CD8-positive, alpha-beta memory T cell (primary cell): ENCODE measurements at regions of chr1 and their contacts with region 1.

Region 1: DNA sequence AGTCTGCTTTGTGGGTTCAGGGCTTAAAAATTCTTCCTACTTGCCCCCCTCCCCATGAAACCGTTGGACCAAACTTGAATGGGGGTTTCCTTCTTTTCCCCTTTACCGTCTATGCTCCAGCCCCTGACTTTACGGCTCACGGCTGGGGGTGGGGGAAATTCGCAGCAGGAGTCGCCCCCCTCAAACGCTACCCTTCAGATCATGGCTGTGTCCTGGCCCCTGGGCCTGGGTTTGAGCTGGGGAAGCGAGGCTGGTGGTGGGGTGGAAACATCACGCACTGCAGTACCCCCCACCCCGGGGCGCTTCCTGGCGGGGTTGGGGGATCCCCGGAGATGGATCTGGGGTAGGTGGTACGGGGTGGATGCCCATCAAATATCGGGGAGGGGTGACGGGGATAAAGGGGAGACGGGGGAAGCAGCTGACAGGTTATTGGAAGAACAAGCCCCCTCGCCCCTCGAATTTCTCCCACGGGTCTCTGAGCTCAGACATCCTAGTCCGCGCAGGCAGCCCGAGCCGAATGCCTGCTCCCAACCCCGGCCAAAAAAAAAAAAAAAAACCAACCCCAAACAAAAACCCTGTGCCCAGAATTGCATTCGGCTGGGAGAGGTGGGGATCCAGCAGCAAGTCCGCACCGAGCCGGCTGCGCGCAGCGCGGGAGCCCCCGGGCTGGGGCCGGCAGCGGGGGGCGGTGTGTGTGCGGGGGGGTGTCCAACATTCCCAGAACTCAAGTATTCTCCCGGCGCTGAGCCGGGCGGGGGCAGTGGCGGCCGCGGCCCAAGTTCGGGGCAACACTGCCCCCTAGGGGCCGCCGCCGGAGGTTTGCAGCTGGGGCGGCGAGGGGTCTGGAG is 59.0 kb upstream of the ACOT11 start:
- DNase-seq: peak; percentile 56 to 78 (median 67)
- H3K4me3 ChIP-seq: peak overlapping the region; percentile 83
- H3K4me3 Mint-ChIP-seq: peak overlapping the region; percentile 85 to 93 (median 86)
- H3K27ac ChIP-seq: peak overlapping the region; percentile 75
- H3K27ac Mint-ChIP-seq: peak overlapping the region; percentile 75 to 97 (median 84)
- H3K4me1 ChIP-seq: peaks cover 35% of the 10 kb centered on the region
- H3K4me1 Mint-ChIP-seq: peaks cover 41 to 47% (median 45%) of the 10 kb centered on the region in 3 donors
- H3K27me3 ChIP-seq: no peaks in the 10 kb centered on the region
- H3K27me3 Mint-ChIP-seq: peaks cover 5 to 8% of the 10 kb centered on the region in 2 donors

Region 2: DNA sequence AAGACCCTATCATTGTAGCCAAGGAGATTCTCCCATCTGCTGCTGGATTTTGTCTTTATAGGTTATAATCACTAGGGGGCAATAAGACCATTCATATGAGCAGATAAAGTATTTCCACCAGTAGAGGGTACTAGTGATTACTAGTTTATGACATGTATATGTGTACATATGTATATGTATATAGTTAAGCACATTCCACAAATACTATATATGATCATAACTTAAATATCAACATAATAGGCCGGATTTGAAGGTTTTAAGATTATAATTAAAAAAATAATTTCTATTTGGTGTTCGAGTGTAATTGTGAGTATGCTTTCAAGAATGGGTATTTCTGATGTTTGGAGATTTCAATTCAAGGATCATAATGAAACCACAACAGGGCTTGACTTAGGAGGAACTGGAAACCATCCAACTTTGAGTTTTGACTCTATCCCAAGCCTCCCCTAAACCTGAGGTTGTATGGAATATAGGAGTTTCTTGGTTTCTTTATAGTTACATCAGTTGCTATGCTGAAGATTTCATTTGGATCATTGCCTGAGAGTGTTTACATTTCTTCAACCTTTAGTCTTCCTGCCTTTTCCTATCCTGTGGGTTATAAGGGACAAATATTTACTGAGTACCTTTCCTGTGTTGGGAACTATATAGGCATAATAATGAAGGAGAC is 418.7 kb before region 1 on chr1:
- CTCF ChIA-PET with region 1: interaction called, 17 read pairs
- POLR2A ChIA-PET with region 1: no interaction called
- DNase-seq: peak in 2 of 5 donors; percentile 48
- H3K4me3 ChIP-seq: no peak overlapping the region
- H3K4me3 Mint-ChIP-seq: no peak overlapping the region
- H3K27ac ChIP-seq: no peak overlapping the region
- H3K27ac Mint-ChIP-seq: peak overlapping the region in 1 of 8 donors; percentile 19
- H3K4me1 ChIP-seq: no peaks in the 10 kb centered on the region
- H3K4me1 Mint-ChIP-seq: peaks cover 0 to 2% (median 0%) of the 10 kb centered on the region in 3 donors
- H3K27me3 ChIP-seq: no peaks in the 10 kb centered on the region
- H3K27me3 Mint-ChIP-seq: no peaks in the 10 kb centered on the region

Region 3: GRCh38 chr1:54124472-54124871 is 364.5 kb before region 1 on chr1:
- CTCF ChIA-PET with region 1: interaction called, 11 read pairs
- POLR2A ChIA-PET with region 1: interaction called, 4 read pairs
- DNase-seq: no peak
- H3K4me3 ChIP-seq: no peak overlapping the region
- H3K4me3 Mint-ChIP-seq: no peak overlapping the region
- H3K27ac ChIP-seq: no peak overlapping the region
- H3K27ac Mint-ChIP-seq: no peak overlapping the region
- H3K4me1 ChIP-seq: no peaks in the 10 kb centered on the region
- H3K4me1 Mint-ChIP-seq: peaks cover 2 to 11% (median 8%) of the 10 kb centered on the region in 3 donors
- H3K27me3 ChIP-seq: no peaks in the 10 kb centered on the region
- H3K27me3 Mint-ChIP-seq: peaks cover 9 to 13% of the 10 kb centered on the region in 2 donors

Region 4: GRCh38 chr1:54199765-54200518 is 289.1 kb before region 1 on chr1 and contains the starts of genes CYB5RL and MRPL37:
- CTCF ChIA-PET with region 1: interaction called, 13 read pairs
- POLR2A ChIA-PET with region 1: no interaction called
- DNase-seq: peak; percentile 79 to 92 (median 89)
- H3K4me3 ChIP-seq: peak within 1 kb of the TSS; percentile 94
- H3K4me3 Mint-ChIP-seq: peak within 1 kb of the TSS; percentile 88 to 96 (median 93)
- H3K27ac ChIP-seq: peak within 1 kb of the TSS; percentile 75
- H3K27ac Mint-ChIP-seq: peak within 1 kb of the TSS; percentile 27 to 93 (median 92)
- H3K4me1 ChIP-seq: peaks cover 19% of the 10 kb centered on the region
- H3K4me1 Mint-ChIP-seq: peaks cover 37 to 55% (median 38%) of the 10 kb centered on the region in 3 donors
- H3K27me3 ChIP-seq: no peaks in the 10 kb centered on the region
- H3K27me3 Mint-ChIP-seq: no peaks in the 10 kb centered on the region
- total RNA-seq, gene CYB5RL: 11.8 to 13.9 TPM
- total RNA-seq, gene MRPL37: 226 to 229 TPM

Region 5: GRCh38 chr1:54406339-54407153 is 82.5 kb before region 1 on chr1 and contains the start of gene SSBP3:
- CTCF ChIA-PET with region 1: interaction called, 71 read pairs
- POLR2A ChIA-PET with region 1: interaction called, 63 read pairs
- DNase-seq: peak; percentile 86 to 93 (median 91)
- H3K4me3 ChIP-seq: peak within 1 kb of the TSS; percentile 64
- H3K4me3 Mint-ChIP-seq: peak within 1 kb of the TSS; percentile 95 to 99 (median 97)
- H3K27ac ChIP-seq: peak within 1 kb of the TSS; percentile 84
- H3K27ac Mint-ChIP-seq: peak within 1 kb of the TSS; percentile 91 to 98 (median 94)
- H3K4me1 ChIP-seq: peaks cover 62% of the 10 kb centered on the region
- H3K4me1 Mint-ChIP-seq: peaks cover 59 to 66% (median 61%) of the 10 kb centered on the region in 3 donors
- H3K27me3 ChIP-seq: no peaks in the 10 kb centered on the region
- H3K27me3 Mint-ChIP-seq: peaks cover 0 to 5% of the 10 kb centered on the region in 2 donors
- total RNA-seq, gene SSBP3: 41.6 to 52.7 TPM

Region 6: GRCh38 chr1:54474639-54475251 is 14.3 kb before region 1 on chr1:
- CTCF ChIA-PET with region 1: interaction called, 48 read pairs
- POLR2A ChIA-PET with region 1: interaction called, 8 read pairs
- DNase-seq: peak in 4 of 5 donors; percentile 26 to 65 (median 28)
- H3K4me3 ChIP-seq: peak overlapping the region; percentile 84
- H3K4me3 Mint-ChIP-seq: peak overlapping the region; percentile 75 to 93 (median 83)
- H3K27ac ChIP-seq: peak overlapping the region; percentile 8
- H3K27ac Mint-ChIP-seq: peak overlapping the region; percentile 86 to 99 (median 96)
- H3K4me1 ChIP-seq: peaks cover 44% of the 10 kb centered on the region
- H3K4me1 Mint-ChIP-seq: peaks cover 51 to 56% (median 55%) of the 10 kb centered on the region in 3 donors
- H3K27me3 ChIP-seq: no peaks in the 10 kb centered on the region
- H3K27me3 Mint-ChIP-seq: no peaks in the 10 kb centered on the region

Region 7: GRCh38 chr1:55478742-55479141 is 989.7 kb after region 1 on chr1:
- CTCF ChIA-PET with region 1: no interaction called
- POLR2A ChIA-PET with region 1: no interaction called
- DNase-seq: no peak
- H3K4me3 ChIP-seq: no peak overlapping the region
- H3K4me3 Mint-ChIP-seq: no peak overlapping the region
- H3K27ac ChIP-seq: no peak overlapping the region
- H3K27ac Mint-ChIP-seq: no peak overlapping the region
- H3K4me1 ChIP-seq: no peaks in the 10 kb centered on the region
- H3K4me1 Mint-ChIP-seq: no peaks in the 10 kb centered on the region
- H3K27me3 ChIP-seq: no peaks in the 10 kb centered on the region
- H3K27me3 Mint-ChIP-seq: peaks cover 15 to 39% of the 10 kb centered on the region in 2 donors